ENCODE measurements at regions of chr3 and their contacts with region 1.

Region 1: GRCh38 chr3:130893376-130894129 is at the start of gene ATP2C1:
- DNase-seq: peak; percentile 92
- H3K27ac ChIP-seq: peak within 1 kb of the TSS; percentile 85
- CTCF ChIP-seq: no peak

Region 2: DNA sequence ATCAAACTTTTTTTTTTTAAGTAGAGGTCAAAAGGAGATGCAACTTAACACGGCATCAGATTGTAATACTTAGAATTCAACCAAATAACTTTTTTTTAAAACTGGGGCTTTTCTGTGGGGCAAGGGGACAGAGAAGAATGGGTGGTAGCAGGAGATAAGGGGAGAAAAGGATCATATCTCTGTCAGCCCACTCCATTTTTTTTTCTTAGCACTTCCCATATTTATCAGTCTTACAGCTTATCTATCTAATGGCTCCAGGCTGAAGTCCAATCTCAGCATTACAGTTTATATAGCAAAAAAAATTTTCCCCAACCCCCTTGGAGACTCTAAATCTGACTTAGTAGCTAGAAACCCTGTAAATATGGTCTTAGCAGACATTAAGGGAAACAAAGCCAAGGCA is 216.2 kb before region 1 on chr3:
- CTCF ChIA-PET with region 1: no interaction called
- POLR2A ChIA-PET with region 1: interaction called, 12 read pairs
- DNase-seq: no peak
- H3K27ac ChIP-seq: no peak overlapping the region
- CTCF ChIP-seq: no peak

Region 3: DNA sequence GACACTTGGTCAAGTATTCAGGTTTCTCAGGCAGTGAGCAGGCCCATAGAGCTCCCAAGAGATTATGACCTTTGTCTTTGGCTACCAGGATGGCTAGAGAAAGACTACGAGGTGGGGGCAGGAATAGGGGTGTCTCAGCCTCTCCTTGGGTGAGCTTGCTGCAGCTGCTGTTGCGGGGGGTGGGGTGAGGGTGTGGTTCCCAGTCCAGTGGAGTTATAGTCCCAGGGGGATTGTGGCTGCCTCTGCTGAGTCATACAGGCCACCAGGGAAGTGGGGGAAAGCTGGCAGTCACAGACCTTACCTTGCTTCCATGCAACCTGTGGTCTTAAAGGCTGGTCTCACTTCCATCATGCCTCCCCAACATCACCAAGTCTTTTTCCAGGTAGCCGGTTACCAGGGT is 32.1 kb after region 1 on chr3:
- CTCF ChIA-PET with region 1: no interaction called
- POLR2A ChIA-PET with region 1: no interaction called
- DNase-seq: no peak
- H3K27ac ChIP-seq: no peak overlapping the region
- CTCF ChIP-seq: no peak